Right cardiac atrium (tissue), 5 donors: ENCODE measurements at regions of chr15 and their contacts with region 1.

Region 1: GRCh38 chr15:40878785-40879184 is 4.8 kb upstream of the RHOV start:
- DNase-seq: no peak
- ATAC-seq: no peak
- H3K4me3 ChIP-seq: no peak overlapping the region
- H3K27ac ChIP-seq: no peak overlapping the region
- H3K4me1 ChIP-seq: no peaks in the 10 kb centered on the region
- H3K27me3 ChIP-seq: no peaks in the 10 kb centered on the region

Region 2: GRCh38 chr15:40523611-40524010 is 355.2 kb before region 1 on chr15:
- intact Hi-C with region 1: loop called in 1 of 4 experiments (anchors 5 kb)
- DNase-seq: no peak
- ATAC-seq: no peak
- H3K4me3 ChIP-seq: no peak overlapping the region
- H3K27ac ChIP-seq: no peak overlapping the region
- H3K4me1 ChIP-seq: no peaks in the 10 kb centered on the region
- H3K27me3 ChIP-seq: no peaks in the 10 kb centered on the region